ENCODE measurements at regions of chr2 and their contacts with region 1.

Region 1: GRCh38 chr2:195656859-195657633 is at the start of gene SLC39A10:
- DNase-seq: peak; percentile 97 to 99 (median 99)
- ATAC-seq: peak; percentile 86
- H3K4me3 ChIP-seq: peak within 1 kb of the TSS; percentile 84 to 93
- H3K27ac ChIP-seq: peak within 1 kb of the TSS; percentile 96 to 99
- H3K4me1 ChIP-seq: peaks cover 12 to 41% of the 10 kb centered on the region in 2 donors
- H3K27me3 ChIP-seq: no peaks in the 10 kb centered on the region
- CTCF ChIP-seq: peak in 1 of 2 donors; percentile 19
- polyA plus RNA-seq, gene SLC39A10: 40.9 to 58.8 (median 45.1) TPM

Region 2: GRCh38 chr2:195168369-195168768 is 488.7 kb before region 1 on chr2:
- intact Hi-C with region 1: no loop called
- DNase-seq: no peak
- ATAC-seq: no peak
- H3K4me3 ChIP-seq: no peak overlapping the region
- H3K27ac ChIP-seq: no peak overlapping the region
- H3K4me1 ChIP-seq: no peaks in the 10 kb centered on the region
- H3K27me3 ChIP-seq: no peaks in the 10 kb centered on the region
- CTCF ChIP-seq: no peak

Region 3: GRCh38 chr2:195498176-195498575 is 158.9 kb before region 1 on chr2:
- intact Hi-C with region 1: loop called in 1 of 2 experiments (anchors 10 kb)
- DNase-seq: peak in 3 of 4 donors; percentile 14 to 40 (median 14)
- ATAC-seq: no peak
- H3K4me3 ChIP-seq: no peak overlapping the region
- H3K27ac ChIP-seq: no peak overlapping the region
- H3K4me1 ChIP-seq: no peaks in the 10 kb centered on the region
- H3K27me3 ChIP-seq: no peaks in the 10 kb centered on the region
- CTCF ChIP-seq: peak; percentile 29

Region 4: DNA sequence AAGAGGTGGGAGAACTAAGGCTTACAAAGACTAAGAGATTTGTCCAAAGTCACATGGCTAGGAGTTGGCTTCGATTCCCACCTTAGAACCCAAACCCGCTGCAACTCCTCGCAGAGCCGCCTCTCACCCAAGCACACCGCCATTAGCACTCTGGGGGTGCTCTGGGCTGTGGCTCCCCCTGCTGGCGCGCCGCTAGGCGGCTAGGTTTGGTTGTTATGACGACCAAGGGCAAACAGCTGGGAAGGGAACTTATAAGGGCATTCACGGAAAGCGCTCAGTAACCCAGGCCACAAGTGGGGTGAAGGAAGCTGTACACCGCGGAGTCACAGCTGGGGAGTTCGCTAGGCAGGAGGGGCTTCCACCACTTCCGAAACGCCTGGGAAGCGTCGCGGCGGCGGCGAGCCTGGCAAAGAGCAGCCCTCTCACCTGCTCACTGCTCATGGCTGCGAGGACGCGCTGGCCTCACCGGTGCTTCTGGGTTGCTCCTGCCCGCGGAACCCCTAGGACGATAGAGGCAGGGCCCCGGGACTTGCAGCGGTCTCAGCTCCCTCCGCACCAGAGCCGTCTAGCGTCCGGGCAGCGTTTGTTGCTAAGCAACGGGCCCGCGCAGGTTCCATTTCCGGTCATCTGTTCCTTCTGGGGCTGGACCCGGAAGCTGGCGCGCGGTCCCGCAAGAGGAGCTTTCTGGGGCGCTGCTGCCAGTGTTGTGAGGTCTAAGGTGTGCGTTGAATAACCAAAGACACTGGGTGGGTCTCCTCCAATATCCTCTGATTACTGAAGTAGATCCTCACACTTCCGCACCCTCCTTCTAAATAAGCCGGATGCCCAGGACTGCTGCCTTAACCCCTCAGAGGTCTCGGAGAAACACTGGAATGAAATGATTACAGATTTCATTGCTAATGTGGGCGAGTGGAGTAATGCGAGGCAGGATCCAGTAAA is 411.5 kb after region 1 on chr2 and contains the start of gene DNAH7:
- intact Hi-C with region 1: loop called in 1 of 2 experiments (anchors 10 kb)
- DNase-seq: peak; percentile 84 to 96 (median 92)
- ATAC-seq: peak; percentile 99
- H3K4me3 ChIP-seq: peak within 1 kb of the TSS; percentile 61 to 84
- H3K27ac ChIP-seq: peak within 1 kb of the TSS; percentile 20 to 95
- H3K4me1 ChIP-seq: peaks cover 0 to 12% of the 10 kb centered on the region in 2 donors
- H3K27me3 ChIP-seq: no peaks in the 10 kb centered on the region
- CTCF ChIP-seq: peak; percentile 47 to 91
- polyA plus RNA-seq, gene DNAH7: 2.4 to 6.2 (median 4.8) TPM

Measured in left lung (tissue), 14 donors.